Posterior cingulate gyrus (tissue), 11 donors: ENCODE measurements at regions of chr9 and their contacts with region 1.

Region 1: GRCh38 chr9:125746017-125746773 is 978 bp upstream of the PBX3 start:
- DNase-seq: peak; percentile 88 to 99 (median 93)

Region 2: DNA sequence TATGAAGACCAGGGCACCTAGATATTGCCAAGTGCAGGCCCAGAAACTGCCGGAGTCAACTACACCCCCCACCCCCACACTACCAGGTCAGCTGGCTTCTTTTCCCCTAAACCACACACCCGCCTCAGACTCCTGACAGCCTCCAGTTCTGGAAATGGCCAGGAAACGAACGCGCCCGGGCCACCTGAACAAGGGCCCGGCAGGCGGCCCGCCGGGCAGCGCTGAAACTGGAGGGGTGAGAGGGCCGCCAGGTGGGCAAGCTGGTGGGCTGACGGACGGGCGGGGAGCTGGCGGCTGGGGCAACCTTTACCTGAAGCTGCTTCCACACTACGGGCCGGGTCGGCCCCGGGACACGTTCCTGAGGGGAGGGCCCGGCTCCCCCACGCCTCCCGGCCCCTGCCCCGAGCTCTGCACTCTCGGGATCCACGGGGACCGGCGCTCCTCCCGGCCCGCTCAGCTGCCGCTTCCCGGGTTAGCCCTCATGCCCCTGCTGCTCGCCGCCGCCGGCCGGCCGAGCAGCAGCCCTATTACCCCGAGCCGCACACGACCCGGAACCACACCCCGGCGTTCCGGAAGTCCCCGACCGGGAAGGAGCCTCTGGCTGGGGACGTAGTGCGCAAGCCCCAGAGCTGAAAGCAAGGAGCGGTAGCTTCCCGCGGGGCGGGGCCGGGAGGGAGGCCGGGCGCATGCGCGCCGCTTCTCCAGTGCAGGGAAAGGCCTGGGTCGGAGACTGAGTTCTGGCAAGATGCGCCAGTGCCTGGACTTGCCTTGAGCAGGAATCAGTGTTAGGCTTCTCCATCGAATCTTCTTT is 39.3 kb before region 1 on chr9 and contains the start of gene MAPKAP1:
- intact Hi-C with region 1: loop called (anchors 1 kb)
- DNase-seq: peak; percentile 97 to 100 (median 98)

Region 3: DNA sequence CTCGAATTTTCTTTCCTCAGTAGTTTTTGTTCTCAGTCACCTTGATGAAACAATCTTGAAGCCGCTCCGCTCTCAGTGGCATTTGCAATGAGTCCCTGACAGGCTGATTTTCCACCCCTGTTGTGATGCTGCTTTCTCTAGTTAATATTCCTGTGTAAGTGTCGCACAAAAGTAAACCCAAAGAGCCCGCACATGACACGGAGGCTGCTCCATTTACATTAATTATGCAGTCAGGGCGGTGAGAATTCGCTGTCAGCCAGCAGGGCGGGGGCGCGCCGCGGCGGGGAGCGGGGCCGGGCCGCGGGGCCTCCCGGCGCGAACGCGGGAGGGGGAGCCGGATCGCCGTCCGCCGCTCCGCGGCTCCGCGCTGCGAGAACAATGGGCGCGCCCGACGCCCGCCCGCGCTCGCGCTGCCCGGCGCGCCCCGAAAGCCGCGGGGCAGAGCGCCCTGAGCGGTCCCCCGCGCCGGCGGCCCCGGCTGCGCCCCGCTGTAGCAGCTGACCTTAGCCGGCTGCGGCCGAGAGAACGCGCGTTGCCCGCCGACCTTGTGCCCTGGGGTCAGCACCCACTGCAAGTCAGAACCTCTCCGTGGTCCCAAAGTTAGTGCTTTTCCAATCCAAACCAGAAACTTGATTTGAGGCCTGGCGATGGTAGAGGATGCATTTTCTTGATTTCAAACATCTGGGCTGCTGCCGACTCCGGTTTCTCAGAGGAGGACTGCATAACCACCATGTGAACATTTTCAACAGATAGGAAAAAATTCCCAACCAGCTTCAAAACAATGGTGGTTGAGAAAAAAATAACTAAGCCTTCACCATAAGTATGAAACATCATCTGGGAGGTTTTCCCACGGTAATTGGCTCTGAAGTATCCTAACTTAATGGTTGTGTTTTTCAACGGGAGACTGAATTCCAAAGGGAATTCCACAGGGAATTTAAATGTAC is 143.6 kb after region 1 on chr9:
- intact Hi-C with region 1: loop called (anchors 1 kb)
- DNase-seq: peak; percentile 26 to 93 (median 56)